ENCODE measurements at regions of chr20 and their contacts with region 1.

Region 1: DNA sequence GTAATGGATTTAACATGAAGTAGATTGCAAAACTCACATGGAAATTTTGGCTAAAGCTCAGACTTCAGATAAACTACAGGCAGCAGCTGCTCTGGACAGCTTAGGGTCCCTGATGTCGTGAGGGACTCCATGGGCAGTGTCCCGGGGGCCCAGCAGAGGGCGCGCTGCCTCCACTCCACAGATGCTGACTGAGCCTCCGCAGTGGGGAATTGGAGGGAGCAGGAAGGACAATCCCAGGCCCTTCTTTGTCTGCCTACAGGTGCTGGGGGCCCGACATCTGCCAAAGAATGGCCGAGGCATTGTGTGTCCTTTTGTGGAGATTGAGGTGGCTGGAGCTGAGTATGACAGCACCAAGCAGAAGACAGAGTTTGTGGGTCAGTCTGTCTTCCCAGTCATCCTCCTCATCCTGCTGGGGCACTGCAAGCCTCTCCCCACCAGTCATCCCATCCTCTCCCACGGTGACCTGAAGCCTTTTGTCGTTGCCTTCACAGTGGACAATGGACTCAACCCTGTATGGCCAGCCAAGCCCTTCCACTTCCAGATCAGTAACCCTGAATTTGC is 35.9 kb downstream of the PLCG1 start:
- DNase-seq: peak; percentile 90
- H3K4me3 ChIP-seq: no peak overlapping the region
- H3K27ac ChIP-seq: peak overlapping the region; percentile 89
- H3K4me1 ChIP-seq: peaks cover 71% of the 10 kb centered on the region
- H3K27me3 ChIP-seq: no peaks in the 10 kb centered on the region
- CTCF ChIP-seq: peak; percentile 99

Region 2: DNA sequence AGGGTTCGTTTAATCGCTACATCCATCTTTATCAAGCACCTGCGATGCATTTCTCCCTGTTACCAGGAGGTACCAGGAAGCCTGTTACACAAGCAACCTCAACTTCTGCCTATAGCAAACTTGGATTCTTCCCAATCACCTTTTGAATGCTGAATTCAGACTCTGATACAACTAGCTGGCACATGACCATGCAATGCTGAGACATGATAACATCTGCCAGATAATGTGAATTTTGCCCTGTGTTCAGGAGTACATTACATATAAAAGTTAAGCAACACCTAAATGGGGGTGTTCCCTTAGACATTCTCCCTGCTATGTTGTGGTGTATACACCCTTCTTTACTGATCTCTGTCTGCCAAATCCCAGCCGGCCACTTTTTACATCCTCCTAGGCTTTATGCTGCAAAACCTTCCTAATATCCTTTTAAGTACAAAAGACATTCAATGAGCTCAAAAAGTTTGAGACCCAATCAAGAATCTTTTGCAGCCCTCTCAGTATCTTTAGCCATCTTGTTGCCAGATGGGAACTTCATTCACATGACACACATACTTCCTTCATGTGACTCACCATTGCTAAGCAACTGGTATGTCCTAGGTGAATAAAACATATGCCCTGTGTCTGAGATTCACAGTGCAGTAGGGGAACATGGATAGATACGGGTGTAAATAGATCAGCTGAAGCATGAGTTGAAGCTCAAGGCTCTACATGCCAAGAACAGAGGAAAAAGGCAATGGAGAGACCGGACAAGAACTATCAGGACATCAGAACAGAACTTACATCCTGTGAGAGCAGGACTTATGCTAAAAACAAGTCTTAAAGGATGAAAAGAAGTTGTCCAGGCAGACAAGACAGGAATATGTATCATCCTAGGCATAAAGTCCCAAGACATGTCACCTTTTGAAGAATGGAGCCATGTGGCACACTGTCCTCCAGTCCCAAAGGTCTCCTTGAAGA is 60.0 kb after region 1 on chr20:
- intact Hi-C with region 1: loop called (anchors 5 kb)
- DNase-seq: no peak
- H3K4me3 ChIP-seq: peak overlapping the region; percentile 46
- H3K27ac ChIP-seq: peak overlapping the region; percentile 85
- H3K4me1 ChIP-seq: peaks cover 72% of the 10 kb centered on the region
- H3K27me3 ChIP-seq: no peaks in the 10 kb centered on the region
- CTCF ChIP-seq: no peak

Region 3: DNA sequence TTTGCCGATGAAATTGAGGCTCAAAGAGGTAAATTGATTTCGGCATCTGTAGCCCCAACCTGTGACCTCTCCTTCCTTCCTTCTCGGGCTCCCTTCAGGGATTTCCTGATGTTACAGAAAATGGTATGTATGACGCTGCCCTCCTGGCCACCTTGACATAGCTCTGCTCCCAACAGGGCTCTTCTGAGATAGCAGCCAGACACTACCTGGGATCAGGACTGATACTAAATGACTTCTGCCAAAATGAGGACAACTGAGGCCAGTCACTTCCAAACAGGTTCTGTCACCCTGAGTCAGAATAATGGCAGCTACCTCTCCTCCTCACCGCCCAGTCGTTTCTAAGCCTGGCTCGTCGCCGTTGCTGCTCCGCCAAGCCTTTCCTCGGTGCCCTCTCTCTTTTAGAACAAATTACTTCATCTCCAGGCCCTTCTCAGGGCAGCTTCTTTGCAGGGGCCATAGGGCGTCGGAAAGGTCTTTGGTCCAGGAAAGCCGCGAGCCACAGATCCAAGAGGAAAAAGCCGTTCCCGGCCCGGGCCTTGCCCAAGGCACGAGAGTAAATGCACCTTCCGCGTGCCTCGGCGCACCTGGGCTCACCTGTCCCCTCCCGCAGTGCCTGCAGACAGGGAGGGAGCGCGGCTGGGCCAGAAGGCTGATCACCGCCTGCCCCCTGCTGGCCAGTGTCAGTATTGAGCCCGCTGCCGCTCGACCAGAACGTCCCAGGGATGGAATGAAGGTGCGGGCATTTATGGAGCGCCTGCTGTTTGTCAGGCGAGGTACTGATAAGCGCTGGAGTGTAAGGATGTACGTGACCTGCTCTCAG is 166.5 kb after region 1 on chr20:
- intact Hi-C with region 1: loop called (anchors 5 kb)
- DNase-seq: peak; percentile 81
- H3K4me3 ChIP-seq: peak overlapping the region; percentile 72
- H3K27ac ChIP-seq: peak overlapping the region; percentile 91
- H3K4me1 ChIP-seq: peaks cover 49% of the 10 kb centered on the region
- H3K27me3 ChIP-seq: no peaks in the 10 kb centered on the region
- CTCF ChIP-seq: peak; percentile 99

Measured in left ventricle myocardium inferior (tissue), 1 donor.